HepG2 (cell line): ENCODE measurements at regions of chr12 and their contacts with region 1.

Region 1: DNA sequence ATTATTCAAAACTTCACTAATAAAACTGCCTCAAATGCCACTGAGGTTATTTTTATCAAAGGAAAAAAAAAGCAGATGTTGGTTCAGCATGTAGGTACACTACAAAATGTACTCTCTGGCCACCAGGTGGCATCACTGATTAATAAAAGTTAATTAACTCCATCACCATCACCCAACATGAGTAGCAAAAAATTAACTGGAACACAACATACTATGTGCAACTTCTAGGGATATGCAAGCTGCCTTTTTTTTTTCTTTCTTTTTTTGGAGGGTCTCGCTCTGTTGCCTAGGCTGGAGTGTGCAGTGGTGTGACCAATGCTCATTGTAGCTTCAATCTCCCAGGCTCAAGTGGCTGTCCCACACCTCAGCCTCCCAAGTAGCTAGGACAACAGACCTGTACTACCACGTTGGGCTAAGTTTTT is 43.8 kb upstream of the NR2C1 start:
- DNase-seq: peak; percentile 70
- ATAC-seq: peak; percentile 86
- H3K4me3 ChIP-seq: no peak overlapping the region
- H3K27ac ChIP-seq: no peak overlapping the region
- H3K4me1 ChIP-seq: peaks cover 15% of the 10 kb centered on the region
- H3K27me3 ChIP-seq: no peaks in the 10 kb centered on the region
- CTCF ChIP-seq: peak; percentile 77
- EP300 ChIP-seq: no peak
- POLR2A ChIP-seq: no peak
- RAD21 ChIP-seq: peak; percentile 77; the same call in 1 of the 2 replicates

Region 2: DNA sequence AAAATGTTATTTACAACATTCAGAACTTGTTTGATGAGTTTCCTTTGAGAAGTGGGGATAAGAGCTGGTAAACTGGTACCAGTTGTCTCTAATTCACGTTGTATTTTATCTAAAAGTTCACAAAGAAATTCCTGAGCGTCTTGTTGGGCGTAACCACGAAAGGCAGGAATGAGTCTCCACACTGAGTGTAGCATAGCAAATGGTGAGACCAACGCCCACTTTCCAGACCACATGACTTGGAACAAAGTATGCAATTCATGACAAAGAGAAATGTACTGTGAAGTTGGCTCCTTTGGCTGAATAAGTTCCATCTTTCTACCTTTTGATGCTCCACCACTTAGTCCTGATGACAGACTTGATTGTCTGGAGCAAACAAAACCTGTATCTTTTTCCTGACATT is 415.7 kb after region 1 on chr12:
- CTCF ChIA-PET with region 1: interaction called, 12 read pairs
- POLR2A ChIA-PET with region 1: no interaction called
- in situ Hi-C with region 1: loop called (anchors 25 kb)
- intact Hi-C with region 1: loop called (anchors 1 kb)
- DNase-seq: peak; percentile 5
- ATAC-seq: no peak
- H3K4me3 ChIP-seq: no peak overlapping the region
- H3K27ac ChIP-seq: no peak overlapping the region
- H3K4me1 ChIP-seq: no peaks in the 10 kb centered on the region
- H3K27me3 ChIP-seq: peaks cover 0 to 9% of the 10 kb centered on the region in 2 experiments; a peak in 1 of 5 replicates
- CTCF ChIP-seq: no peak
- EP300 ChIP-seq: no peak
- POLR2A ChIP-seq: no peak
- RAD21 ChIP-seq: no peak

Region 3: GRCh38 chr12:95548539-95549391 is 431.6 kb after region 1 on chr12:
- CTCF ChIA-PET with region 1: no interaction called
- POLR2A ChIA-PET with region 1: no interaction called
- in situ Hi-C with region 1: loop called (anchors 25 kb)
- intact Hi-C with region 1: no loop called
- DNase-seq: no peak
- ATAC-seq: peak; percentile 38; the same call in 2 of the 3 replicates
- H3K4me3 ChIP-seq: peak overlapping the region; percentile 37 to 60 (median 49); a peak in 4 of 6 replicates
- H3K27ac ChIP-seq: no peak overlapping the region
- H3K4me1 ChIP-seq: no peaks in the 10 kb centered on the region
- H3K27me3 ChIP-seq: peaks cover 0 to 35% of the 10 kb centered on the region in 2 experiments; a peak in 2 of 5 replicates
- CTCF ChIP-seq: no peak
- EP300 ChIP-seq: no peak
- POLR2A ChIP-seq: no peak
- RAD21 ChIP-seq: no peak